A673 (cell line): ENCODE measurements at regions of chr4 and their contacts with region 1.

Region 1: DNA sequence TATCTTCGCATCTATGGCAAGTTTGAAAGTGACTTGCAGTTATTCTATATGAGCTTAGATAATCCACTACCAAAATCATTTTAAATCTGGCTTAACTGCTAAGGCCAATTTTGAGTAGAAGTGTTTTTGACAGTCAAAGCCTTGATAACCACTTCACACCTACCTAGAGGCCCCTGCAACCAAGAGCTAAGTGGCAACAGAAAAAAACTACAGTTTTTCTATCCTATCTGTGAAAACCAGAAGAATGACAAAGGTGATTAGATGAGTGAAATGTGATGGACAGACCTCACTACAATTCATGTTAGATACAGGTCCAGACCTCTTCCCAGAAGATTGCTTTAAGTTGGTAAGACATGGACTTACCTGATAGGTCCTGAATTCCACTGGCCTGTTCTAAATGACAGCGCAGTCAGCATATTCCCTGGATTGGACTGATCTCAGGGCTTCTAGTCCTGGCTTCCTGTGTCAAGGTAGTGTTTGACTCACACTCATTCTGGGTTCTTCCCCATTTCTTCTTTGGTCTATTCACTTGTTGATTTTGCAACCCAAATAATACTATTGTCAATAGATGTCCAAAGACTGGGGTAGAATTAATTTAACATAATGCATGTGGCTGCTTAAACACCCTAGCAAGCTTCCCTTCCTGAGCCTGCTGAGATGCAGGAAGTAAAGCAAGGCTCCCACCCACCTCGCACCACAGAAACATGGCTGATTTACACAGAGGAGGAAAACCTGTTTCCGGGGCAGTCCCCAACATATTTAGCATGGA is 65.1 kb downstream of the PPP3CA start:
- DNase-seq: peak; percentile 98
- H3K4me3 ChIP-seq: peak overlapping the region; percentile 20
- H3K27ac ChIP-seq: peak overlapping the region; percentile 90
- H3K4me1 ChIP-seq: peaks cover 94% of the 10 kb centered on the region
- H3K27me3 ChIP-seq: no peaks in the 10 kb centered on the region
- CTCF ChIP-seq: no peak

Region 2: DNA sequence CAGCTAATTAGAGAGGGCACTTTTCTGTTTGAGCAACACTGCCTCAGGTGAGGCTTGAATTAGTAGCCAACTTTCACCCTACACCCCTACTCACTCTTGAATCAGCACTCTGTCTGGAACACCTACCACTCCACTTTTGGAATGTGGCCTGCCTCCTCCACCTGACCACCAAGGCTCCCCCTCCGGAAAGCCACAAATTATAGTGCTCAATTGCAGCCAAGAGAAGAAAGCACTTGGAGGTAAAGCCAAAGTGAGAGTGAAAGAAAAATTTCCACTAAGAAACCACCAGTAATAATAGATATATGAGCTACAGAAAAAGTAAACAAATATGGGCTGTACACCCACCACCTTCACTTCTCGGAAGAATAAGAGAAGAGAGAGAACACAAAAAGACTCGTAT is 24.0 kb after region 1 on chr4:
- CTCF ChIA-PET with region 1: no interaction called
- POLR2A ChIA-PET with region 1: interaction called, 13 read pairs
- intact Hi-C with region 1: no loop called
- DNase-seq: no peak
- H3K4me3 ChIP-seq: no peak overlapping the region
- H3K27ac ChIP-seq: peak overlapping the region; percentile 47
- H3K4me1 ChIP-seq: peaks cover 55% of the 10 kb centered on the region
- H3K27me3 ChIP-seq: no peaks in the 10 kb centered on the region
- CTCF ChIP-seq: no peak

Region 3: DNA sequence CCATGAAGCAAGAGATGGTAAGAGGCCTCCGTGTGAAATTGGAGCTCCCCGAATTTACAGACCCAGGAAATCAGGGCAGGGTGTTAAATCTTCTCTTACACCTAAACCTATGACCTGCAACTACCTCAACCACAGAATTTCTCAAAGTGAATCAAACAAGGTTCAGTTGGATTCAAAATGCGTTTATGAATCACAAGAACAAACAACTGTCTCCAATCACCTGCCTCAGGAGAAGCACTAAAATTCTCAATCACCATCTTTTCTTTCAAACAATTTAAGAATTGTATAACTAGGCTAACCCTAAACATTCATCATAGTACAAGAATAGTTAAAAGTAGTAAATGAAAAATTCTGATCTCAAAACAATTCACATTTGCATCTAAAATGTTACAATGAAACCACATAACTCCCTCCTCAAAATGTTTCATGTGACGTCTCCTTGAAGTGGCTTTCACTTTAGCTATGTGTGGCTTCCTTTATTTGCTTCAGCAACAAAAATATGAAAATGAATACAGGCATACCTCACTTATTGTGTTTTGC is 45.9 kb after region 1 on chr4:
- CTCF ChIA-PET with region 1: interaction called, 4 read pairs
- POLR2A ChIA-PET with region 1: interaction called, 4 read pairs
- intact Hi-C with region 1: loop called (anchors 1 kb)
- DNase-seq: no peak
- H3K4me3 ChIP-seq: no peak overlapping the region
- H3K27ac ChIP-seq: peak overlapping the region; percentile 90
- H3K4me1 ChIP-seq: peaks cover 70% of the 10 kb centered on the region
- H3K27me3 ChIP-seq: no peaks in the 10 kb centered on the region
- CTCF ChIP-seq: no peak